ENCODE measurements at regions of chr20 and their contacts with region 1.

Region 1: DNA sequence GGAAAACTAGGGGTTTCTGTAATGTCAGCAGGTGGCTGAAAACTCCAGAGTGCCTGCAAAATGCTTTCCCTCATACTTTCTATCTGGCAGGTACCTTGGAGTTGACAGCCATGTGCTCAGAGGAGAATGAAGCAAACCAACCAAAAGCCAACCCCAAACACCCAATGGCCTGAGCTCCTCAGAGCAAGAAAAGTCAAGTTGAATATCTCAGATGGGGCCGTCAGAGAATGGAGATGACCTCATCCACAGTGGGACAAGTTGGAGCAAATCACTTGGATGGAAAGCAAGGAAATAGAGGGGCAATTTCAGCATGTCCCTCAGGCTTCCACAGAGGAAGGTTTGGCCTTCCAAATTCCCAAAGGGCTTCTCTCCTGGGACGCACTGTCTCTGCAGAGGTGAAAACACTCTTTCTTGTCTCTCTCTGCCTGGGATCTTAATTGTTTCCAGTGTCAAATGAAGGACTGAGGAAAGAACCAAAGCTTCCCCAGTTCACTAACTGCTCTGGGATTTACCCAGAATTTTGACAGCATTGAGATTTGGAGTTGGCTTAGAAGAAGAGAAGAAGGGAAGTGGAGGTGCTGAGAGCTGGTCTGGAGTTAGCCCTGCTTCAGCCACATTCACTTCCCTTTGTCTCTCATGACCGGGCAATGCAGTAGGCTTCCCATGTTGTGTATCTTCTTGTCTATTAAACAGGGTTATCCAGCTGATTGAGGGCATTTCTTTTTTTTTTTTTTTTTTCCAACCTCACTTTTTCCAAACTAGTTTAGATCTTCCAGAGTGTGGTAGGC is 42.2 kb downstream of the PRND start:
- DNase-seq: no peak
- ATAC-seq: no peak

Region 2: GRCh38 chr20:4713401-4713800 is 50.5 kb before region 1 on chr20:
- intact Hi-C with region 1: no loop called
- DNase-seq: no peak
- ATAC-seq: no peak

Region 3: DNA sequence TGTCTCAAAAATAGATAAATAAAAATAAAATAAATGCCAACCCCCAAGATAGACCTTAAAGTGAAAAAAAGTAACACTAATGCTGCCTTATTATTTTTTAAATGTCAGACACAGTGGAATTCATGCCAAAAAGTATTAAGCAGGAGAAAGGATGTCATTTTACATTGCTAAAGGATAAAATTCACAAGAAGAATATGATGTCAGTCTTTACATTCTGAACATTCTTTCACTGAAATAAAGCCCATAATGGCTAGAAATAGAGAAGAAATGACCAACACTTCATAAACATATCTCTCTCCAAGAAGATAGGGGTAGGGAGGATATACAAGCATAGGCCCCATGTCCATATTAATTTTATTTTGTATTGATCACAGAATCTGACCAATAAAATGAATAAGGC is 190.0 kb after region 1 on chr20:
- intact Hi-C with region 1: loop called in 1 of 2 experiments (anchors 2 kb)
- DNase-seq: no peak
- ATAC-seq: no peak